ENCODE measurements at regions of chr1 and their contacts with region 1.

Region 1: GRCh38 chr1:156480411-156481192 is 20.0 kb downstream of the MEF2D start:
- DNase-seq: peak; percentile 50
- ATAC-seq: peak; percentile 65; the same call in 1 of the 2 replicates
- H3K4me3 ChIP-seq: no peak overlapping the region
- H3K27ac ChIP-seq: no peak overlapping the region
- H3K4me1 ChIP-seq: peaks cover 33% of the 10 kb centered on the region
- H3K27me3 ChIP-seq: no peaks in the 10 kb centered on the region
- CTCF ChIP-seq: peak; percentile 63
- POLR2A ChIP-seq: no peak
- RAD21 ChIP-seq: peak; percentile 63

Region 2: DNA sequence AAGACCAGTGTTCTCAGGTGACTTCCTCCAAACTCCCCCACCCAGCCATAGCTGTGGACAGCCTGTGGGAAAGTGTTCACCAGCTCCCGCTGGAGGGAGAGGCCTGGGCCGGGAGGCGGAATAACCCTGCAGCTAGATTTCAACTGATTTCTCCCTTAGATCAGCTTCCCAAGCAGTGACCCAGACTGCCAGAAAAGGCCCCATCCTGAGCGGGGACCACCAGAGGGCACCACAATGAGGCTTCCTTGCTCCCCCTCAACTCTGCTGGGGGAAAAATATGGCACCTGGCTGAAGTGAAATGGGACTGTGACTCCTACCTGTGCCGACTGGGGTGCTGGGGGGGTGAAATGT is 60.8 kb before region 1 on chr1:
- CTCF ChIA-PET with region 1: no interaction called
- POLR2A ChIA-PET with region 1: no interaction called
- dilution Hi-C with region 1: no loop called
- in situ Hi-C with region 1: no loop called
- intact Hi-C with region 1: no loop called
- DNase-seq: no peak
- ATAC-seq: no peak
- H3K4me3 ChIP-seq: no peak overlapping the region
- H3K27ac ChIP-seq: no peak overlapping the region
- H3K4me1 ChIP-seq: peaks cover 1% of the 10 kb centered on the region; the same call in 1 of the 2 replicates
- H3K27me3 ChIP-seq: peaks cover 92% of the 10 kb centered on the region
- CTCF ChIP-seq: no peak
- POLR2A ChIP-seq: no peak
- RAD21 ChIP-seq: no peak

Region 3: GRCh38 chr1:156571949-156572662 is 91.5 kb after region 1 on chr1 and contains the start of gene IQGAP3:
- CTCF ChIA-PET with region 1: interaction called, 4 read pairs
- POLR2A ChIA-PET with region 1: no interaction called
- dilution Hi-C with region 1: no loop called
- in situ Hi-C with region 1: no loop called
- intact Hi-C with region 1: loop called (anchors 1 kb)
- DNase-seq: peak; percentile 69
- ATAC-seq: peak; percentile 75
- H3K4me3 ChIP-seq: peak within 1 kb of the TSS; percentile 73
- H3K27ac ChIP-seq: peak within 1 kb of the TSS; percentile 66
- H3K4me1 ChIP-seq: peaks cover 7% of the 10 kb centered on the region
- H3K27me3 ChIP-seq: peaks cover 15% of the 10 kb centered on the region
- CTCF ChIP-seq: no peak
- POLR2A ChIP-seq: no peak; the same call in 1 of the 2 replicates
- RAD21 ChIP-seq: no peak
- total RNA-seq, gene IQGAP3: 13.6 TPM in 2 replicates

Region 4: GRCh38 chr1:156591432-156592157 is 111.0 kb after region 1 on chr1 and contains the start of gene NAXE:
- CTCF ChIA-PET with region 1: no interaction called
- POLR2A ChIA-PET with region 1: no interaction called
- dilution Hi-C with region 1: no loop called
- in situ Hi-C with region 1: no loop called
- intact Hi-C with region 1: loop called (anchors 5 kb)
- DNase-seq: peak; percentile 41
- ATAC-seq: peak; percentile 99
- H3K4me3 ChIP-seq: peak within 1 kb of the TSS; percentile 78
- H3K27ac ChIP-seq: peak within 1 kb of the TSS; percentile 67
- H3K4me1 ChIP-seq: peaks cover 3% of the 10 kb centered on the region; the same call in 1 of the 2 replicates
- H3K27me3 ChIP-seq: peaks cover under 1% of the 10 kb centered on the region; the same call in 1 of the 2 replicates
- CTCF ChIP-seq: no peak
- POLR2A ChIP-seq: peak; percentile 69; the same call in 1 of the 2 replicates
- RAD21 ChIP-seq: no peak
- total RNA-seq, gene NAXE: 70.3 and 74.2 TPM in 2 replicates

Region 5: GRCh38 chr1:157034137-157034800 is 553.7 kb after region 1 on chr1:
- CTCF ChIA-PET with region 1: no interaction called
- POLR2A ChIA-PET with region 1: no interaction called
- dilution Hi-C with region 1: no loop called
- in situ Hi-C with region 1: no loop called
- intact Hi-C with region 1: no loop called
- DNase-seq: peak; percentile 22
- ATAC-seq: no peak
- H3K4me3 ChIP-seq: no peak overlapping the region
- H3K27ac ChIP-seq: no peak overlapping the region
- H3K4me1 ChIP-seq: no peaks in the 10 kb centered on the region
- H3K27me3 ChIP-seq: no peaks in the 10 kb centered on the region
- CTCF ChIP-seq: no peak
- POLR2A ChIP-seq: no peak
- RAD21 ChIP-seq: no peak